Heart right ventricle (tissue), 16 donors: ENCODE measurements at regions of chr2 and their contacts with region 1.

Region 1: GRCh38 chr2:237739101-237739500 is 59.5 kb upstream of the RBM44 start:
- DNase-seq: peak; percentile 73 to 75
- ATAC-seq: peak; percentile 86 to 95 (median 90)
- H3K4me3 ChIP-seq: peak overlapping the region in 3 of 10 donors; percentile 10 to 18 (median 10)
- H3K27ac ChIP-seq: peak overlapping the region; percentile 37 to 93 (median 82)
- H3K4me1 ChIP-seq: peaks cover 32 to 100% (median 94%) of the 10 kb centered on the region in 9 donors
- H3K27me3 ChIP-seq: no peaks in the 10 kb centered on the region
- CTCF ChIP-seq: peak in 3 of 9 donors; percentile 15 to 32 (median 29)

Region 2: DNA sequence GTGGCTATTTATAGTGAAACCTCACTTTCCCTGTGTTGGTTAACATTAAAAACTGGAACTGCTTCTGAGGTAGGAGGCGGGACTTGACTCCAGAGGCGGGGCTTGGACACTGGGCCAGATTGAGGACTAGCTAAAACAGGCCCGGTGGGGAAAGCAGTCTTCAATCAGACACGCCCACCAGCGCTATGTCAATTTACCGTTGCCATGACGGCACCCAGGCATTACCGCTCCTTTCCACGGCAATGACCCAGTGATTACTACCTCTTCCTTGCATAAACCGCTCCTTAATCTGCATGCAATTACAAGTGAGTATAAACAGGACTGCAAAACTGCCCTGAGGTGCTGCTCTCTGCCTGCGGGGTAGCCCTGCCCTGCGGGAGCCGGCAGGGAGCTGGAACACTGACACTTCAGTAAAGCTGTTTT is 76.4 kb before region 1 on chr2:
- intact Hi-C with region 1: no loop called
- DNase-seq: peak; percentile 84 to 86
- ATAC-seq: peak; percentile 73 to 90 (median 87)
- H3K4me3 ChIP-seq: no peak overlapping the region
- H3K27ac ChIP-seq: peak overlapping the region in 8 of 10 donors; percentile 15 to 65 (median 52)
- H3K4me1 ChIP-seq: peaks cover 10 to 46% (median 38%) of the 10 kb centered on the region in 9 donors
- H3K27me3 ChIP-seq: no peaks in the 10 kb centered on the region
- CTCF ChIP-seq: no peak

Region 3: GRCh38 chr2:237691908-237692600 is 47.0 kb before region 1 on chr2:
- intact Hi-C with region 1: loop called in 7 of 10 experiments (anchors 5 kb)
- DNase-seq: peak; percentile 96 to 98
- ATAC-seq: peak; percentile 70 to 83 (median 80)
- H3K4me3 ChIP-seq: peak overlapping the region; percentile 71 to 97 (median 87)
- H3K27ac ChIP-seq: peak overlapping the region; percentile 82 to 98 (median 95)
- H3K4me1 ChIP-seq: peaks cover 15 to 93% (median 87%) of the 10 kb centered on the region in 9 donors
- H3K27me3 ChIP-seq: no peaks in the 10 kb centered on the region
- CTCF ChIP-seq: peak in 1 of 9 donors; percentile 12

Region 4: DNA sequence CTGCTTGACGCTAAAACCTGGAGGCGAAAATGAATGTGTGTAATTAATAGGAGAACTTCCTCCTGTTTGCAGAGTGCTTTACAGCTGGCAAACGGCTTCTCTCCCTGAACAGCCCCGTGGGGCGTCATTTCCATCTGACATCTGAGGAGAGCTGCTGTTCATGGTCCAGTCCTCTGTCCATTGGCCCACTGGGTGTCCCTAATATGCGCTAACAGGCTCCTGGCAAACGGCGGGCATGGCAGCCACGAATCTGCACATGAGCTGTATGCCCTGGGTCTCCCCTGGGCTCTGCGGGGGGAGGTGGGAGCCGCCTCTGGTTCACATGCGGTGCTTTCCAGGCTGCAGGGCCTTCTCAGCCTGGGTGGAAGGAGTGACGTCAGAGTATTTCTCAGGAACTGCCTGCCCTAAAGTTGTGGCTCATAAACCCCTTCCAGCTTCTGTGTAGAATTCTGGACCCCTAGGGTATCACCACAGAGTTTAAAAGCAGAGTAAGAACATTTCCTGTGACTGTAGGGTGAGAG is 38.5 kb before region 1 on chr2:
- intact Hi-C with region 1: loop called in 6 of 10 experiments (anchors 5 kb)
- DNase-seq: peak; percentile 66 to 84
- ATAC-seq: peak; percentile 52 to 77 (median 71)
- H3K4me3 ChIP-seq: peak overlapping the region in 3 of 10 donors; percentile 3 to 17 (median 12)
- H3K27ac ChIP-seq: peak overlapping the region; percentile 42 to 92 (median 84)
- H3K4me1 ChIP-seq: peaks cover 65 to 100% (median 100%) of the 10 kb centered on the region in 9 donors
- H3K27me3 ChIP-seq: no peaks in the 10 kb centered on the region
- CTCF ChIP-seq: peak in 1 of 9 donors; percentile 29